Ovary (tissue), 10 donors: ENCODE measurements at regions of chr1 and their contacts with region 1.

Region 1: DNA sequence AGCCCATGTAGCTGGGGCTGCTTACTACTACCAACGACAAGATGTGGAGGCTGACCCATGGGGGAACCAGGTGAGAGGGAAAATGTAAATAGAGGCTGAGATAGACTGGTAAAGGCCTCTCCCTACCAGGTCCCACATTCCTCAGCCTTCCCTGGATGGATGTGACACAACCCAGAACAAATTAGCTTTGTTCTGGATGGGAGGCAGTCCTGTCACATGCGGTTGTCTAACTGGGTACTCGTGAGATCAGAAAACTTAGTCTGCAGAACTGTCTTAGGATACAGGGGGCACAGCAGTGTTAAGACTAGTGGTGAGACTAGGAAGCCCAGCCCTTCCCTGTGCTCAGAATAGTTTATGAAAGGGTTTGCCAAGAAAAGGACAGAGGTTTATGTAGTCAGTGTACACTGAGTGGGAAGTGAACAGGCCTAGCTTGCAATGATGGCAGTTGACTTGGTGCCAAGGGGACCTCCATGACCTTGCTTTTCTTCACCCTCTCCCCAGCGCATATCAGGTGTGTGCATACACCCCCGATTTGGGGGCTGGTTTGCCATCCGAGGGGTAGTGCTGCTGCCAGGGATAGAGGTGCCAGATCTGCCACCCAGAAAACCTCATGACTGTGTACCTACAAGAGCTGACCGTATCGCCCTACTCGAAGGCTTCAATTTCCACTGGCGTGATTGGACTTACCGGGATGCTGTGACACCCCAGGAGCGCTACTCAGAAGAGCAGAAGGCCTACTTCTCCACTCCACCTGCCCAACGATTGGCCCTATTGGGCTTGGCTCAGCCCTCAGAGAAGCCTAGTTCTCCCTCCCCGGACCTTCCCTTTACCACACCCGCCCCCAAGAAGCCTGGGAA is 8.4 kb downstream of the MMACHC start:
- DNase-seq: no peak
- H3K4me3 ChIP-seq: no peak overlapping the region
- H3K27ac ChIP-seq: no peak overlapping the region
- H3K4me1 ChIP-seq: no peaks in the 10 kb centered on the region
- H3K27me3 ChIP-seq: no peaks in the 10 kb centered on the region
- CTCF ChIP-seq: no peak
- EP300 ChIP-seq: no peak
- POLR2A ChIP-seq: no peak

Region 2: GRCh38 chr1:45563843-45564242 is 55.3 kb after region 1 on chr1:
- intact Hi-C with region 1: loop called in 2 of 4 experiments (anchors 5 to 10 kb)
- DNase-seq: no peak
- H3K4me3 ChIP-seq: no peak overlapping the region
- H3K27ac ChIP-seq: no peak overlapping the region
- H3K4me1 ChIP-seq: no peaks in the 10 kb centered on the region
- H3K27me3 ChIP-seq: no peaks in the 10 kb centered on the region
- CTCF ChIP-seq: no peak
- EP300 ChIP-seq: no peak
- POLR2A ChIP-seq: no peak

Region 3: DNA sequence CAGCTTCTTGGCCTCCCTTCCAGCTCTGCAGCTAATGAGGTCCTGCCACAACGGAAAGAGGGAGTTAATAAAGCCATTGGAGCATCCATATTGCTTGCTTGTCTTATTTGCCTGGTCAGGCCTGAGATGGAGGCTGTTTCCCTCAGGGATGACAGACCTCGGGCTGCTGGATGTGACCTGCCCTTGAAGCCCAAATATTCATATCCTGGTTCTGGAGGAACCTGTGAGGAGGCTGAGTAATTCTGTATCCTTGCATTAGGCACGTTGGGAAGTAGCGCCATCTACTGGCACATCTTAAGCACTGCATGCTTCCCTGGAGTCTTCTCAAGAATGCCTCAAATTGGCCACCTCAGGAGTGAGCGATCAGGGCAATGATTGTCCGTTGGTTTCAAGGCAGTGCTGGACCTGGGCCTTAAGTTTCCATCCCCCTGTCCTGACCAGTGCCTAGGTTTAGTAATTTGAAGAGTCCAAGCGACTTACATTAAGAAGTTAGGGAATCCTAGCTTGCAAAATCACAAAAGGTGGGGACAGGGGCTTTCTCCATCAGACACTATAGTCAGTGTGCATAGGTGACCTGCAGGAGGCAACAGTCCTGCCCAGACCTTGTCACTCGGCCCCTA is 61.5 kb after region 1 on chr1:
- intact Hi-C with region 1: loop called in 1 of 4 experiments (anchors 10 kb)
- DNase-seq: peak; percentile 60 to 80 (median 70)
- H3K4me3 ChIP-seq: no peak overlapping the region
- H3K27ac ChIP-seq: no peak overlapping the region
- H3K4me1 ChIP-seq: no peaks in the 10 kb centered on the region
- H3K27me3 ChIP-seq: no peaks in the 10 kb centered on the region
- CTCF ChIP-seq: peak; percentile 84 to 89 (median 86)
- EP300 ChIP-seq: no peak
- POLR2A ChIP-seq: no peak